ENCODE measurements at regions of chr19 and their contacts with region 1.

Region 1: DNA sequence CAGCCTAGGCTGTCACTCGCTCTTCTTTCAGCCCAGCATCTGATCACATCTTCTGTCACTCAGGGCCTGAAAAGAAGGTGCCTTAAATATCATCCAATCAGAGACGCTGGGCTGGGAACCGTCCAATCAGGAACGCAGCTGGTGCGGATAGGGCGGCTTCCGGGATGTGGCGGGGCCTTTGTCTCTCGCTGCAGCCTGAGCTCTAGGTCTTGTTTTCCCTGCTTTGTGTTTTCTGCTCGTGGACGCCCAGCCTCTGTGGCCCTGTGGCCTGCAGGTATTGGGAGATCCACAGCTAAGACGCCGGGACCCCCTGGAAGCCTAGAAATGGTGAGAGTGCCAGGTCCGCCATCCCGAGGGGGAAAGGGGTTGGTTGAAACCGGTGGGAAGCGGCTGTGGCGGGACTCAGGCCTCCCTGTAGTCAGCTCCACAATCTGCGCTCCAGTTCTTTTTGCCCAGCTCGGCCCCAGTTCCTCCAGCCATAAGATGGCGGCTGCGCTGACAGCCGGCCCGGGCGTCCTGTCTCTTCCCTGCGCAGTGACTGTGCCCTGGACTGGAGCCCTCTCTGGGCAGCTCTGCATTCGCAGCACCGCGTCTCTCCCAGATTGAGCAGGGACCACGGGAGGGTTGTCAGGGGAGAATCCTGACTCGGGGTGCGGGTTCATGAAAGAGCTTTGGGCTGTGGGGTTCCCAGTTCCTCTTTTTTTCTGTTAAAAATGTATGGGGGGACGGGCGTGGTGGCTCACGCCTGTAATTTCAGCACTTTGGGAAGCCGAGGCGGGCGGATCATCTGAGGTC is at the start of gene ZNF85:
- DNase-seq: peak; percentile 79 to 97 (median 86)
- ATAC-seq: peak; percentile 99
- H3K4me3 ChIP-seq: peak within 1 kb of the TSS; percentile 83
- H3K4me3 Mint-ChIP-seq: peak within 1 kb of the TSS; percentile 96
- H3K27ac ChIP-seq: peak within 1 kb of the TSS; percentile 44 to 75
- H3K27ac Mint-ChIP-seq: peak within 1 kb of the TSS; percentile 89
- H3K4me1 ChIP-seq: peaks cover 12% of the 10 kb centered on the region
- H3K4me1 Mint-ChIP-seq: peaks cover 26% of the 10 kb centered on the region
- H3K27me3 ChIP-seq: no peaks in the 10 kb centered on the region
- H3K27me3 Mint-ChIP-seq: no peaks in the 10 kb centered on the region
- CTCF ChIP-seq: no peak
- total RNA-seq, gene ZNF85: 3.4 to 4.7 TPM

Region 2: DNA sequence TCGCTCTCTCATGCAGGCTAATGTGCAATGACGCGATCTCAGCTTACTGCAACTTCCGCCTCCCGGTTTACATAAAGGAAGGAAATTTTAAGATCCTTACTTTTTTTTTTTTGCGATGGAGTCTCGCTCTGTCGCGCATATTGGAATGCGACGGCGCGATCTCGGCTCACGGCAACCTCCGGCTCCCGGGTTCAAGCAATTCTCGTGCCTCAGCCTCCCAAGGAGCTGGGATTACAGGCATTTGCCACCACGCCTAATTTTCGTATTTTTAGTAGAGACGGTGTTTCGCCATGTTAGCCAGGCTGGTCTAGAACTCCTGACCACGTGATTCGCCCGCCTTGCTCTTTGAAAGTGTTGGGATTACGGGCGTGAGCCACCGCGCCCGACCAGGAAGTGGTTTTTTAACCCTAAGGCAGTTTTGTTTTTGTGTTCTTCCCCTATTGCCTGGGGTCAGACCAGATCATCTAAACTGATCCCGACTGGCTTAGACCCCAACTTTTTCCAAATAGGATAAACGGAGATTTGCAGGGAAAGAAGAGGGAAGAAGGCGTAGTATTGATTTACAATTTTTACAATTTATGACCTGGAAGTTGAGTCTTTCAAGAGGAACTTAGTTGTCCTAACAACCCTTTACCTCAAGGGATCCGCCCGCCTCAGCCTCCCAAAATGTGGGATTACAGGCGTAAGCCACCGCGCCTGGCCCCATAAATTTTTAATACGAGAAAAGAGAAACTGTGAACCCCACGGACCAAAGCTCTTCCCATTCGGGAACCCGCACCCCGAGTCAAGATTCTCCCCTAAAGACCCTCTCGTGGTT is 499.7 kb before region 1 on chr19:
- CTCF ChIA-PET with region 1: no interaction called
- POLR2A ChIA-PET with region 1: interaction called, 10 read pairs
- intact Hi-C with region 1: no loop called
- DNase-seq: peak in 9 of 14 experiments; percentile 6 to 64 (median 34)
- ATAC-seq: no peak
- H3K4me3 ChIP-seq: peak overlapping the region; percentile 83
- H3K4me3 Mint-ChIP-seq: peak overlapping the region; percentile 97
- H3K27ac ChIP-seq: peak overlapping the region; percentile 57 to 65
- H3K27ac Mint-ChIP-seq: peak overlapping the region; percentile 90
- H3K4me1 ChIP-seq: peaks cover 9% of the 10 kb centered on the region
- H3K4me1 Mint-ChIP-seq: peaks cover 15% of the 10 kb centered on the region
- H3K27me3 ChIP-seq: no peaks in the 10 kb centered on the region
- H3K27me3 Mint-ChIP-seq: no peaks in the 10 kb centered on the region
- CTCF ChIP-seq: no peak

Region 3: GRCh38 chr19:20879501-20879900 is 43.8 kb before region 1 on chr19:
- CTCF ChIA-PET with region 1: no interaction called
- POLR2A ChIA-PET with region 1: no interaction called
- intact Hi-C with region 1: no loop called
- DNase-seq: no peak
- ATAC-seq: no peak
- H3K4me3 ChIP-seq: no peak overlapping the region
- H3K4me3 Mint-ChIP-seq: no peak overlapping the region
- H3K27ac ChIP-seq: no peak overlapping the region
- H3K27ac Mint-ChIP-seq: no peak overlapping the region
- H3K4me1 ChIP-seq: no peaks in the 10 kb centered on the region
- H3K4me1 Mint-ChIP-seq: no peaks in the 10 kb centered on the region
- H3K27me3 ChIP-seq: peaks cover 0 to 2% of the 10 kb centered on the region in 2 experiments
- H3K27me3 Mint-ChIP-seq: peaks cover 15% of the 10 kb centered on the region
- CTCF ChIP-seq: no peak

Region 4: GRCh38 chr19:20999731-21000352 is 76.6 kb after region 1 on chr19:
- CTCF ChIA-PET with region 1: no interaction called
- POLR2A ChIA-PET with region 1: interaction called, 15 read pairs
- intact Hi-C with region 1: loop called in 1 of 2 experiments (anchors 2 kb)
- DNase-seq: peak; percentile 66 to 94 (median 80)
- ATAC-seq: peak; percentile 100
- H3K4me3 ChIP-seq: peak overlapping the region; percentile 54
- H3K4me3 Mint-ChIP-seq: peak overlapping the region; percentile 85
- H3K27ac ChIP-seq: no peak overlapping the region
- H3K27ac Mint-ChIP-seq: peak overlapping the region; percentile 32
- H3K4me1 ChIP-seq: peaks cover 10% of the 10 kb centered on the region
- H3K4me1 Mint-ChIP-seq: peaks cover 13% of the 10 kb centered on the region
- H3K27me3 ChIP-seq: no peaks in the 10 kb centered on the region
- H3K27me3 Mint-ChIP-seq: no peaks in the 10 kb centered on the region
- CTCF ChIP-seq: no peak

Region 5: GRCh38 chr19:21082011-21082975 is 159.0 kb after region 1 on chr19 and contains the start of gene ZNF714:
- CTCF ChIA-PET with region 1: no interaction called
- POLR2A ChIA-PET with region 1: interaction called, 5 read pairs
- intact Hi-C with region 1: loop called in 1 of 2 experiments (anchors 2 kb)
- DNase-seq: peak; percentile 57 to 93 (median 74)
- ATAC-seq: peak; percentile 99
- H3K4me3 ChIP-seq: peak within 1 kb of the TSS; percentile 85
- H3K4me3 Mint-ChIP-seq: peak within 1 kb of the TSS; percentile 100
- H3K27ac ChIP-seq: peak within 1 kb of the TSS in 1 of 2 donors; percentile 26
- H3K27ac Mint-ChIP-seq: peak within 1 kb of the TSS; percentile 95
- H3K4me1 ChIP-seq: peaks cover 10% of the 10 kb centered on the region
- H3K4me1 Mint-ChIP-seq: peaks cover 4% of the 10 kb centered on the region
- H3K27me3 ChIP-seq: no peaks in the 10 kb centered on the region
- H3K27me3 Mint-ChIP-seq: no peaks in the 10 kb centered on the region
- CTCF ChIP-seq: no peak
- total RNA-seq, gene ZNF714: 8.0 to 10.0 TPM

Region 6: DNA sequence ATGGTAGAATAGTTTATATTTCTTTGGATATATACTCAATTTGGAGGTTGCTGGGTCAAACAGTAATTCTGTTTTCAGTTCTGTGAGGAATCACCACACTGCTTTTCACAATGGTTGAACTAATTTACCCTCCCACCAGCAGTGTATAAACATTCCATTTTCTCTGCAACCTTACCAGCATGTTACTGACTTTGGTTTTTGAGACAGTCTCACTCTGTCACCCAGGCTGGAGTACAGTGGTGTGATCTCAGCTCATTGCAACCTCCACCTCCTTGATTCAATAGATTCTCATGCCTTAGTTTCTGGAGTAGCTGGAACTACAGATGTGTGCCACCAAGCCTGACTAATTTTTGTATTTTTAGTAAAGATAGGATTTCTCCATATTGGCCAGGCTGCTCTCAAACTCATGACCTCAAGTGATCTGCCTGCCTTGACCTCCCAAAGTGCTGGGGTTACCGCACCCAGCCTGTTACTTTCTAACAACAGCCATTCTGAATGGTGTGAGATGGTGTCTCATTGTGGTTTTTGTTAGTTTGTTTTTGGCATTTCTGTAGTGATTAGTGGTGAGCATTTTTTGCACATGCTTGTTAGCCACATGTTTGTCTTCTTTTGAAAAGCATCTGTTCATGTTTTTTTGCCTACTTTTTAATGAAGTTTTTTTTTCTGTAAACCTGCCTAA is 171.2 kb after region 1 on chr19:
- CTCF ChIA-PET with region 1: no interaction called
- POLR2A ChIA-PET with region 1: no interaction called
- intact Hi-C with region 1: no loop called
- DNase-seq: no peak
- ATAC-seq: no peak
- H3K4me3 ChIP-seq: no peak overlapping the region
- H3K4me3 Mint-ChIP-seq: no peak overlapping the region
- H3K27ac ChIP-seq: no peak overlapping the region
- H3K27ac Mint-ChIP-seq: no peak overlapping the region
- H3K4me1 ChIP-seq: no peaks in the 10 kb centered on the region
- H3K4me1 Mint-ChIP-seq: no peaks in the 10 kb centered on the region
- H3K27me3 ChIP-seq: no peaks in the 10 kb centered on the region
- H3K27me3 Mint-ChIP-seq: no peaks in the 10 kb centered on the region
- CTCF ChIP-seq: no peak

Region 7: DNA sequence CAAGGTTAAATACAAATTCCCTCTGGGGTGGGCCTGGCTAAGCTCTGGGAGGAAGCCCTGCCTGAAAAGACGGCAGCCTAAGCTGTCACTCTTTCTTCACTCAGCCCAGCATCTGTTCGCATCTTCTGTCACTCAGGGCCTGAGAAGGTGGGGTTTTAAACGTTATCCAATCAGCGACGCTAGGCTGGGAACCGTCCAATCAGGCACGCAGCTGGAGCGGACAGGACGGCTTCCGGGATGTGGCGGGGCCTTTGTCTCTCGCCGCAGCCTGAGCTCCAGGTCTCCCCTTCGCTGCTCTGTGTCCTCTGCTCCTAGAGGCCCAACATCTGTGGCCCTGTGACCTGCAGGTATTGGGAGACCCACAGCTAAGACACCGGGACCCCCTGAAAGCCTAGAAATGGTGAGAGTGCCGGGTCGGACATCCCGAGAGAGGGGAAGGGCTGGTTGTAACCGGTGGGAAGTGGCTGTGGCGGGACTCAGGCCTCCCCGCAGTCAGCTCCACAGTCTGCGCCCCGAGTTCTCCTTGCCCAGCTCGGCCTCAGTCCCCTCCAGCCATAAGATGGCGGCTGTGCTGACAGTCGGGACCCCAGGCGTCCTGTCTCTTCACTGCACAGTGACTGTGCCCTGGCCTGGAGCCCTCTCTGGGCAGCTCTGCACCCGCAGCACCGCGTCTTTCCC is 218.7 kb after region 1 on chr19 and contains the start of gene ZNF431:
- CTCF ChIA-PET with region 1: no interaction called
- POLR2A ChIA-PET with region 1: interaction called, 12 read pairs
- intact Hi-C with region 1: loop called in 1 of 2 experiments (anchors 5 kb)
- DNase-seq: peak; percentile 79 to 96 (median 84)
- ATAC-seq: peak; percentile 99
- H3K4me3 ChIP-seq: peak within 1 kb of the TSS; percentile 67
- H3K4me3 Mint-ChIP-seq: peak within 1 kb of the TSS; percentile 95
- H3K27ac ChIP-seq: peak within 1 kb of the TSS; percentile 25 to 37
- H3K27ac Mint-ChIP-seq: peak within 1 kb of the TSS; percentile 91
- H3K4me1 ChIP-seq: peaks cover 8% of the 10 kb centered on the region
- H3K4me1 Mint-ChIP-seq: peaks cover 45% of the 10 kb centered on the region
- H3K27me3 ChIP-seq: no peaks in the 10 kb centered on the region
- H3K27me3 Mint-ChIP-seq: no peaks in the 10 kb centered on the region
- CTCF ChIP-seq: no peak
- total RNA-seq, gene ZNF431: 24.6 to 25.9 TPM

Measured in CD4-positive, alpha-beta T cell (primary cell).